CD4-positive, alpha-beta T cell (primary cell): ENCODE measurements at regions of chr6 and their contacts with region 1.

Region 1: DNA sequence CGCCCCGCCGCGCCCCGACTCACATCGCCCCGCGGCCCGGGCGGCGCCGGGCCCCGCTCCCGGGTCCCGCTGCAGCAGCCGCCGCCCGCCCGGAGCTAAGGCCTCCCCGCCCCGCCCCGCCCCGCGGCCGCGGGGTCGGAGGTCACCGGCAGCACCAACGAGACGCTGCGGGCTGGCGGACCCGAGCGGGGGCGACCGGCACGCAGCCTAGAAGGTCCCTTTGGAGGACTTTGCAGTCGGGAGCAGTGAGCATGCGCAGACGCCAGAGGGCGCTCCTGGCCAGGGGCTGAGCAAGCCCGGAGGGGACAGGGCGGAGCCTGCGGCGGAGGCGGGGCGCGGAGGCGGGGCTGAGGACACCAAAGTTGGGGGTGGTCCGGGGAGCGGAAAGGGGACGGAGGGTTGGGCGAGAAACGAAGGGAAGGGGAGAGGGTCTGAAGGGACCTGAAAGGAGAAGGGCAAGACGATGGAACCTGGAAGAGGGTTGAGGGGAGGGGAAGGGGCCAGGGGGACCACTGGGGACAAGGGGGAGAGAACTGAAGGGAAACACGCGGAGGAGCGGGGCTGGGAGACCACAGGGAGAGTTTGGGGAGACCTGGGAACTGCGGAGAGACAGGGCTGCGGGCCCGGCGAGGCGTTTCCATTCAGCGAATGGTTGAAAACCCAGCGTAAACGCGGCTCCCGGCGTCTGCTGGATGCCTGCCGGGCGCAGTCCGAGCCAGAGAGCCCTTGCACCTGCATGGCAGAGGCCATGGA is at the start of gene FRS3:
- DNase-seq: peak; percentile 95 to 100 (median 99)
- ATAC-seq: peak; percentile 97
- H3K4me3 ChIP-seq: peak within 1 kb of the TSS; percentile 75
- H3K4me3 Mint-ChIP-seq: peak within 1 kb of the TSS; percentile 99
- H3K27ac ChIP-seq: no peak within 1 kb of the TSS
- H3K27ac Mint-ChIP-seq: peak within 1 kb of the TSS; percentile 68
- H3K4me1 ChIP-seq: peaks cover 24% of the 10 kb centered on the region
- H3K4me1 Mint-ChIP-seq: peaks cover 25% of the 10 kb centered on the region
- H3K27me3 ChIP-seq: peaks cover 7 to 8% of the 10 kb centered on the region in 2 experiments
- H3K27me3 Mint-ChIP-seq: peaks cover 11% of the 10 kb centered on the region
- CTCF ChIP-seq: peak; percentile 75
- total RNA-seq, gene FRS3: 4.6 to 5.4 TPM

Region 2: DNA sequence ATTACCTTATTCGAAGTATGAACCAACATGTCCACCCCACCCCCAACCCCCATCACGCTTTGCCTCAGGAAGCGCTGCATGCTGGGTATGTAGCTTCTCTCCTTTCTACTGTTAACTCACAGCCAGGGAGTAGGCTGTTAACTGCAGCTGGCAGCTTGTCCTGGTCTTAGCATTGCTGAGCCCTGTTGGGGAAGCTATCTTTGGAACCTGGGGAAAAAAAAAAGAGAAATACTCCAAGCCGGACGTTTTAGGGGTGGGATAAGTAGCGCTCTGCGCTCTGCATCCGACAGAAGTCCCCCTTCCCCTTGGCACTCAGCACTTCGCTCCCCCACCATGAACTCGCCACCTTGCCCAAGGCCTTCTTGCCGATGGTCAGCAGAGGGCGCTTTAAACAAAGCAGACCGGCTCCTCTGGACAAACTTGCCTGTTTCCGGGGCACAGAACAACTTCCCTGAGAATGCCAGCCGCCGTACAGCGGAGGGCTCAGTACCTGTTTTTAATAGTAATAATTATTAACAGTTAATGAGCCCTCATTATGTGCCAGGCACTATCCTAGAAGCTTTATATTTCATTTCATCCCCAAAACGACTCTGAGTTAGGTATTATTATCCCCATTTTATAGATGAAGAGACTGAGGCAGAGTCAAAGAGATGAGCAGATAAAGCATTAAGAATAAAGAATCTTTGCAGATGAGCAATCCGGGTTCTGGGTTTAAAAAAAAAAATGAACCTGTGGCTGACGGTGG is 176.9 kb before region 1 on chr6:
- CTCF ChIA-PET with region 1: no interaction called
- POLR2A ChIA-PET with region 1: no interaction called
- intact Hi-C with region 1: loop called in 1 of 2 experiments (anchors 2 kb)
- DNase-seq: peak; percentile 54 to 86 (median 66)
- ATAC-seq: peak; percentile 80
- H3K4me3 ChIP-seq: no peak overlapping the region
- H3K4me3 Mint-ChIP-seq: no peak overlapping the region
- H3K27ac ChIP-seq: no peak overlapping the region
- H3K27ac Mint-ChIP-seq: no peak overlapping the region
- H3K4me1 ChIP-seq: peaks cover 8% of the 10 kb centered on the region
- H3K4me1 Mint-ChIP-seq: no peaks in the 10 kb centered on the region
- H3K27me3 ChIP-seq: peaks cover 0 to 3% of the 10 kb centered on the region in 2 experiments
- H3K27me3 Mint-ChIP-seq: no peaks in the 10 kb centered on the region
- CTCF ChIP-seq: peak; percentile 80

Region 3: DNA sequence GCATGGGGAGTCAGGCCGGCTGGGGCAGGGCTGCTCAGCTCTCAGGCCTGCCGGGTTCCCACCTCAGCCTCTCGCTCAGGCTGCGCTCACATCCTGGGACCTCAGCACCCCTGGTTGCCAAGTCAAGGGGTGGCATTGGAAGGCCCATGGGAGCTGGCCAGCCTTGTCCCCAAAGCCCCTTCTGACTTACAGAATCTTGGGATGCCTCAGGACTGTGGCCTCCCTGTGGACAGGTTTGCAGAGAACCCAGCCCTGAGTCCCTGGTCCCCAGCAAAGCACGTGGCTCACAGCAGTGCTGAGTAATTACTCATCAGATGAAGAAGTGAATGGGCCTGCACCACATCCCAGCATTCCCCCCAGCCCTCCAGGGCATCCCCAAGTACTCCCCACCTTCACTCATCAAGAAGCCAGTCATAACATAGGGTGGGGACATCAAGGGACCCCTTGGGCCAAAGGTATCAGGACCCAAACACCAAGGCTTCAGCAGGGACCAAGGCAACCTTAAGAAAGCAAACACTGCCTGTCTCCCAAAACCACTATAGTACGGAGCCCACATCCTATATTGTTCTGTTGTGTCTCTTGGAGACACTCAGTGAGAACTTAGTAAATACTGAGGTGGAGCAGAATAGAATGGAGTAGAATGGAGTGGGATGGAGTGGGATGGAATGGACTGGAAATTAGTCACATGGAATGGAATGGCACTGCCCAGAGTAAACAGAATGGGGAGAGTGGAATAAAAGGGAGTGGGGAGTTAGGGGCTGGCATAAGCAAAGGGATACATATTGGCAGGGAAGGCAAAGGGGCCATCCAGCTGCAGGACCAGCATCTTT is 36.3 kb before region 1 on chr6:
- CTCF ChIA-PET with region 1: no interaction called
- POLR2A ChIA-PET with region 1: no interaction called
- intact Hi-C with region 1: no loop called
- DNase-seq: no peak
- ATAC-seq: no peak
- H3K4me3 ChIP-seq: no peak overlapping the region
- H3K4me3 Mint-ChIP-seq: no peak overlapping the region
- H3K27ac ChIP-seq: no peak overlapping the region
- H3K27ac Mint-ChIP-seq: no peak overlapping the region
- H3K4me1 ChIP-seq: no peaks in the 10 kb centered on the region
- H3K4me1 Mint-ChIP-seq: no peaks in the 10 kb centered on the region
- H3K27me3 ChIP-seq: peaks cover 0 to 5% of the 10 kb centered on the region in 2 experiments
- H3K27me3 Mint-ChIP-seq: no peaks in the 10 kb centered on the region
- CTCF ChIP-seq: no peak

Region 4: GRCh38 chr6:43496370-43497128 is 1716.6 kb after region 1 on chr6:
- CTCF ChIA-PET with region 1: no interaction called
- POLR2A ChIA-PET with region 1: no interaction called
- intact Hi-C with region 1: no loop called
- DNase-seq: peak in 2 of 14 experiments; percentile 36 to 45
- ATAC-seq: peak; percentile 53
- H3K4me3 ChIP-seq: no peak overlapping the region
- H3K4me3 Mint-ChIP-seq: no peak overlapping the region
- H3K27ac ChIP-seq: no peak overlapping the region
- H3K27ac Mint-ChIP-seq: no peak overlapping the region
- H3K4me1 ChIP-seq: peaks cover 27% of the 10 kb centered on the region
- H3K4me1 Mint-ChIP-seq: peaks cover 36% of the 10 kb centered on the region
- H3K27me3 ChIP-seq: no peaks in the 10 kb centered on the region
- H3K27me3 Mint-ChIP-seq: no peaks in the 10 kb centered on the region
- CTCF ChIP-seq: no peak

Region 5: GRCh38 chr6:43687437-43688347 is 1907.7 kb after region 1 on chr6 and contains the start of gene MRPS18A:
- CTCF ChIA-PET with region 1: no interaction called
- POLR2A ChIA-PET with region 1: no interaction called
- intact Hi-C with region 1: loop called in 1 of 2 experiments (anchors 5 kb)
- DNase-seq: peak; percentile 57 to 86 (median 72)
- ATAC-seq: peak; percentile 95
- H3K4me3 ChIP-seq: peak within 1 kb of the TSS; percentile 75
- H3K4me3 Mint-ChIP-seq: peak within 1 kb of the TSS; percentile 96
- H3K27ac ChIP-seq: peak within 1 kb of the TSS; percentile 56 to 65
- H3K27ac Mint-ChIP-seq: peak within 1 kb of the TSS; percentile 83
- H3K4me1 ChIP-seq: peaks cover 33% of the 10 kb centered on the region
- H3K4me1 Mint-ChIP-seq: peaks cover 52% of the 10 kb centered on the region
- H3K27me3 ChIP-seq: peaks cover 0 to 1% of the 10 kb centered on the region in 2 experiments
- H3K27me3 Mint-ChIP-seq: no peaks in the 10 kb centered on the region
- CTCF ChIP-seq: no peak
- total RNA-seq, gene MRPS18A: 26.1 to 27.7 TPM